Naive thymus-derived CD4-positive, alpha-beta T cell (primary cell): ENCODE measurements at regions of chr16 and their contacts with region 1.

Region 1: GRCh38 chr16:3457434-3458252 is 14.2 kb downstream of the NAA60 start:
- DNase-seq: peak; percentile 87 to 95 (median 93)
- ATAC-seq: peak; percentile 96
- H3K4me3 ChIP-seq: peak overlapping the region; percentile 84
- H3K4me3 Mint-ChIP-seq: peak overlapping the region; percentile 78 to 88 (median 86)
- H3K27ac ChIP-seq: peak overlapping the region; percentile 96
- H3K27ac Mint-ChIP-seq: peak overlapping the region; percentile 74 to 94 (median 88)
- H3K4me1 ChIP-seq: peaks cover 37 to 45% of the 10 kb centered on the region in 2 donors
- H3K4me1 Mint-ChIP-seq: peaks cover 33 to 57% (median 48%) of the 10 kb centered on the region in 7 donors
- H3K27me3 ChIP-seq: no peaks in the 10 kb centered on the region
- H3K27me3 Mint-ChIP-seq: no peaks in the 10 kb centered on the region

Region 2: GRCh38 chr16:3158471-3159314 is 298.9 kb before region 1 on chr16:
- CTCF ChIA-PET with region 1: no interaction called
- POLR2A ChIA-PET with region 1: no interaction called
- intact Hi-C with region 1: loop called in 1 of 2 experiments (anchors 5 kb)
- DNase-seq: peak; percentile 80 to 98 (median 91)
- ATAC-seq: peak; percentile 97
- H3K4me3 ChIP-seq: peak overlapping the region; percentile 86
- H3K4me3 Mint-ChIP-seq: peak overlapping the region; percentile 87 to 94 (median 92)
- H3K27ac ChIP-seq: peak overlapping the region; percentile 86
- H3K27ac Mint-ChIP-seq: peak overlapping the region; percentile 90 to 99 (median 95)
- H3K4me1 ChIP-seq: peaks cover 5 to 9% of the 10 kb centered on the region in 2 donors
- H3K4me1 Mint-ChIP-seq: peaks cover 10 to 42% (median 28%) of the 10 kb centered on the region in 7 donors
- H3K27me3 ChIP-seq: no peaks in the 10 kb centered on the region
- H3K27me3 Mint-ChIP-seq: peaks cover 0 to 26% (median 0%) of the 10 kb centered on the region in 5 donors

Region 3: DNA sequence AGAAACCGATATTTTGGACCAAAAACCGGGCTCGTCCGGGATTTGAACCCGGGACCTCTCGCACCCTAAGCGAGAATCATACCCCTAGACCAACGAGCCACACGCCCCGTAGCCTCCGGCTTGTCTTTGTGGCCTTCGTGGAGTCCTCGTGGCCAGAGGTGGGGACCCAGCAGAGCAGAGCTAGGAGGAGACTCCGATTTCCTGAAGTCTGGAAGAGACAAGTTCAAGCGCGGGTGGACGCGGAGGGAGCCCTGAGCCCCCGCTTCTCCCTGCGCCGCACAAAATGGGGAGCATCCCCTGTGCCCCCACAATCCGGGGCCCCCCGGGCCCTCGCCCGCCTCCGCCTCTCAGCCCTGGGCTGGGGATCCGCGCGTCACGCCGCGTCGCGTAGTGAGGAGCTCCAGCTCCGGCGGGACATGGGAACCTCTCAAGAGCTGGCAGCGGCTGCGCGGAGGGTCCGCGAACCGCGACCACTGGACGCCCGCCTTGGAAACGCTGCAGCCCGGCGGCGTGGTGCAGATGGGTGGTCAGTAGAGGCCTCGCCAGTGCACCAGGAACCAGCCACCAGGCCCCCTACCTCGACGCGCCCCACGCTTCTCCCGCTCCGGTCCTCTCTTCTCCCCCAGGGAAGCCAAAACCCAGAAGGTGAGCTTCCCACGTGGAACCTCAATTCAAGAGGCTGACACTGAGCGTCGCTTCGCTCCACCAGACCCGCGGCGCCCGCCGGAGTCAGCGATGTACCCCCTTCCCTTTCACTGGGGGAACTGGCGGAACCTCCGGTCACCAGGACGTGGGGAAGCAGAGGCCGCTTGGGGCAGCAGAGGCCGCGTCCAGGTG is 274.8 kb before region 1 on chr16:
- CTCF ChIA-PET with region 1: no interaction called
- POLR2A ChIA-PET with region 1: interaction called, 5 read pairs
- intact Hi-C with region 1: loop called in 1 of 2 experiments (anchors 1 kb)
- DNase-seq: peak in 5 of 9 donors; percentile 32 to 71 (median 43)
- ATAC-seq: peak; percentile 41
- H3K4me3 ChIP-seq: peak overlapping the region; percentile 58
- H3K4me3 Mint-ChIP-seq: peak overlapping the region; percentile 72 to 86 (median 79)
- H3K27ac ChIP-seq: no peak overlapping the region
- H3K27ac Mint-ChIP-seq: peak overlapping the region in 7 of 9 donors; percentile 22 to 86 (median 49)
- H3K4me1 ChIP-seq: peaks cover 8 to 16% of the 10 kb centered on the region in 2 donors
- H3K4me1 Mint-ChIP-seq: peaks cover 24 to 38% (median 27%) of the 10 kb centered on the region in 7 donors
- H3K27me3 ChIP-seq: peaks cover 4 to 26% of the 10 kb centered on the region in 2 donors
- H3K27me3 Mint-ChIP-seq: peaks cover 77 to 88% (median 81%) of the 10 kb centered on the region in 5 donors

Region 4: GRCh38 chr16:3305109-3306068 is 152.3 kb before region 1 on chr16 and contains the starts of genes TIGD7 and ZNF75A:
- CTCF ChIA-PET with region 1: no interaction called
- POLR2A ChIA-PET with region 1: no interaction called
- intact Hi-C with region 1: loop called (anchors 1 to 5 kb)
- DNase-seq: peak; percentile 69 to 89 (median 85)
- ATAC-seq: peak; percentile 96
- H3K4me3 ChIP-seq: peak within 1 kb of the TSS; percentile 78
- H3K4me3 Mint-ChIP-seq: peak within 1 kb of the TSS; percentile 78 to 87 (median 84)
- H3K27ac ChIP-seq: peak within 1 kb of the TSS; percentile 87
- H3K27ac Mint-ChIP-seq: peak within 1 kb of the TSS; percentile 62 to 92 (median 83)
- H3K4me1 ChIP-seq: peaks cover 12 to 13% of the 10 kb centered on the region in 2 donors
- H3K4me1 Mint-ChIP-seq: peaks cover 4 to 38% (median 19%) of the 10 kb centered on the region in 7 donors
- H3K27me3 ChIP-seq: no peaks in the 10 kb centered on the region
- H3K27me3 Mint-ChIP-seq: no peaks in the 10 kb centered on the region
- total RNA-seq, gene TIGD7: 4.9 to 18.4 (median 5.5) TPM
- total RNA-seq, gene ZNF75A: 27.7 to 90.6 (median 53.4) TPM

Region 5: GRCh38 chr16:3443108-3444031 is 14.3 kb before region 1 on chr16 and contains the starts of genes NAA60 and ZNF597:
- CTCF ChIA-PET with region 1: interaction called, 8 read pairs
- POLR2A ChIA-PET with region 1: interaction called, 24 read pairs
- intact Hi-C with region 1: loop called (anchors 1 kb)
- DNase-seq: peak; percentile 38 to 86 (median 79)
- ATAC-seq: peak; percentile 96
- H3K4me3 ChIP-seq: peak within 1 kb of the TSS; percentile 47
- H3K4me3 Mint-ChIP-seq: peak within 1 kb of the TSS; percentile 88 to 100 (median 96)
- H3K27ac ChIP-seq: peak within 1 kb of the TSS; percentile 89
- H3K27ac Mint-ChIP-seq: peak within 1 kb of the TSS; percentile 82 to 98 (median 96)
- H3K4me1 ChIP-seq: peaks cover 5 to 15% of the 10 kb centered on the region in 2 donors
- H3K4me1 Mint-ChIP-seq: peaks cover 0 to 46% (median 24%) of the 10 kb centered on the region in 7 donors
- H3K27me3 ChIP-seq: no peaks in the 10 kb centered on the region
- H3K27me3 Mint-ChIP-seq: peaks cover 0 to 5% (median 0%) of the 10 kb centered on the region in 5 donors
- total RNA-seq, gene NAA60: 38.7 to 63.7 (median 55.3) TPM
- total RNA-seq, gene ZNF597: 2.2 to 5.9 (median 3.8) TPM